Activated naive CD4-positive, alpha-beta T cell treated with anti-CD3 and anti-CD28 coated beads for 36 hours (primary cell): ENCODE measurements at regions of chr10 and their contacts with region 1.

Region 1: GRCh38 chr10:94362360-94363250 is at the start of gene NOC3L:
- DNase-seq: peak; percentile 96
- H3K4me3 Mint-ChIP-seq: peak within 1 kb of the TSS; percentile 83
- H3K27ac Mint-ChIP-seq: peak within 1 kb of the TSS; percentile 91
- H3K4me1 Mint-ChIP-seq: peaks cover 30% of the 10 kb centered on the region
- H3K27me3 Mint-ChIP-seq: no peaks in the 10 kb centered on the region
- total RNA-seq, gene NOC3L: 39.3 to 40.1 TPM

Region 2: DNA sequence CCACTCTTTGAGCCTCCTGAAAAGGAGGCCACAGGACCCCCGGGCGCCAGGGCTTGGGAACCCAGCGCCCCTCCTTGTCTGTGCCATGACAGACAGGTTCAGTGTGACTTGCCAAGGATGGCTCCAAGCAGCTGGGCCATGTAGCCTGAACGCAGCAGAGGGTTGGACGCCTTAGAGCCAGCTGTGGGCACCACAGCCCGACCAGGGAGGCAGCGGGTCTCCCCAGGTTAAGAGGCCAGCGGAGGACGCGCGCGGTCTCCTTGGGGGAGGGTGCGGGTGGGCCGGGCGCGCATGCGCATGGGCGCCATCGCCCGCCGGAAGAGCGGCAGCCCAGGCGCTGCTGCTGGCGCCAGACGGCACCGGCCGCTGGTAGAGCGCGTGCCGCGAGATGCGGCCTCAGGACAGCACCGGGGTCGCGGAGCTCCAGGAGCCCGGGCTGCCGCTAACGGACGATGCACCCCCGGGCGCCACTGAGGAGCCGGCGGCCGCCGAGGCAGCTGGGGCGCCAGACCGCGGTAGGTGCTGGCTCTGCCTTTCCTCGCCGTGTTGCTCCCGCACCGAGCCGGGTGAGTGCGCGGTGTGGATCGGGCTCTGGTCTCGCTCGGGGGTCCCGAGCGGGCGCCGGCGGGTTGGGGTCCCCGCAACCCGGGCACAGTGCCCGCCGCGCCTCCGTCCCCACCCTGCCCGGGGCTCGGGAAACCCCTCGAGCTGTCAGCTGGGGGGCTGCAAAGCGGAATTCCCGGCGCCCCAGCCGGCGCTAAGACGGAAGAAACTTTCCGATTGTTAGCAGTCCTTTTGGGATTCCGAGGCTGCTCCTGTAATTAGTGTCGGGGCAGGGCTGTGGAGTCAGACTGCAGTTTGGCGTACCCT is 468.7 kb before region 1 on chr10 and contains the start of gene SLC35G1:
- CTCF ChIA-PET with region 1: no interaction called
- intact Hi-C with region 1: loop called (anchors 5 kb)
- DNase-seq: peak; percentile 71
- H3K4me3 Mint-ChIP-seq: peak within 1 kb of the TSS; percentile 82
- H3K27ac Mint-ChIP-seq: peak within 1 kb of the TSS; percentile 37
- H3K4me1 Mint-ChIP-seq: peaks cover 37% of the 10 kb centered on the region
- H3K27me3 Mint-ChIP-seq: no peaks in the 10 kb centered on the region
- total RNA-seq, gene SLC35G1: 3.8 to 4.1 TPM

Region 3: GRCh38 chr10:94402015-94402842 is 39.6 kb after region 1 on chr10 and contains the start of gene TBC1D12:
- CTCF ChIA-PET with region 1: interaction called, 3 read pairs
- intact Hi-C with region 1: loop called (anchors 1 kb)
- DNase-seq: peak; percentile 39
- H3K4me3 Mint-ChIP-seq: peak within 1 kb of the TSS; percentile 74
- H3K27ac Mint-ChIP-seq: no peak within 1 kb of the TSS
- H3K4me1 Mint-ChIP-seq: peaks cover 4% of the 10 kb centered on the region
- H3K27me3 Mint-ChIP-seq: peaks cover 58% of the 10 kb centered on the region
- total RNA-seq, gene TBC1D12: 0.25 to 0.33 TPM

Region 4: DNA sequence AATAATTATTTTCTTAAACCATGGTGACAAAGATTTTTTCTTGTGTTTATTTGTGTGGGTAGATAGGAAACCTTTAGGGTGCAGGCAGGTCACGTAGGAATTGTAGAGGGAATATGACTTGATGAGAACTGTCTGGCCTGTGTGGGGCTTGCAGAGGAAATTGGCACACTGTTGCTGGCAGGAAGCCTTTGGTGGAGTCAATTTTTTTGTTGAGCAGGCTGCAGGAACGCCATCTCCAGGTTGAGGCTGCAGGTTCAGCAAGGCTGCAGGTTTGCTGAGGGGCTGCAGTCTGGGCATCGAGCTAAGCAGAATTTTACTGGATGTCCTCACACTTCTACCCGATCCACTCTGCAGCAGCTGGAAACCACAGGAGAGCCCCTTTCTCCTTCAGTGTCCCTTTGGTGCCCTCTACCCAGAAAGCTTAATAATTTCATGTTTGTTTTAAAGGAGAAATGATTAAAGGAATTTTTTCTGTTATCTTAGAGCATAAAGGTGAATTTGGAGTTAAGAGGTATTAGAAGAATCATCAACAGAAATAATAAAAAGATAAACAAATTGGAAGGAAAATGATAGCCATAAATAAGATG is 76.8 kb after region 1 on chr10:
- CTCF ChIA-PET with region 1: interaction called, 6 read pairs
- intact Hi-C with region 1: loop called (anchors 1 kb)
- DNase-seq: no peak
- H3K4me3 Mint-ChIP-seq: no peak overlapping the region
- H3K27ac Mint-ChIP-seq: no peak overlapping the region
- H3K4me1 Mint-ChIP-seq: no peaks in the 10 kb centered on the region
- H3K27me3 Mint-ChIP-seq: peaks cover 17% of the 10 kb centered on the region

Region 5: DNA sequence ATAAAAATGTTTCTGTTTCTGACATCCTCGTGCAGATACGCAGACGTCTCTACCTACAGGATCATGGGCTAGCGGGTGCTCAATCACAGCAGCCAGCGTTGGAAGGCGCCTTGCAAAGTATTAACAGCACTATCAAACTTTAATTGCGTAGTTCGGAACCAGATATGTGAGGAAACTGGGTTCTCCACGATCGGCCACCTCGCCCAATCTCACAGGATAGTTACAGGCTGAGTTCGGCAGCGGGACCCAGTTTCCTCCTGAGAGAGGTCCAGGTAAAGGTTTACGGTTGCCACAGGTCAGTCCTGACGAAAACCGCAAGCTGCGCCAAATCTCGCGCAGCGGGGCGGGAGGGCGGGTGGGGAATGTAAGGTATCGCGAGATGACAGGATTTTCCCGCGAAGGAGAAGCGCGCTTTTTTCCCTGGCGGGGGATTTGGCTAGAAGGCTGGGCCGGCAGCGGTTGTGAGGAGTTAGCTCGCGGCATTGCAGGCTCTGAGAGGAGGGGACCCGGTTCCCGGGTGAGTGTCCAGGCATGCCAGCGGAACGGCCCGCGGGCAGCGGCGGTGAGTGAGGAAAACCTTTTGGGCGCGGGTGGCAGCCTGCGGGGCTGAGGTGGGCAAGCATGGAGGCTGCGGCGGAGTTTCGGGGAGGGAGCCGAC is 182.9 kb after region 1 on chr10 and contains the start of gene HELLS:
- CTCF ChIA-PET with region 1: no interaction called
- intact Hi-C with region 1: loop called (anchors 1 kb)
- DNase-seq: peak; percentile 85
- H3K4me3 Mint-ChIP-seq: peak within 1 kb of the TSS; percentile 98
- H3K27ac Mint-ChIP-seq: peak within 1 kb of the TSS; percentile 89
- H3K4me1 Mint-ChIP-seq: peaks cover 13% of the 10 kb centered on the region
- H3K27me3 Mint-ChIP-seq: peaks cover 2% of the 10 kb centered on the region
- total RNA-seq, gene HELLS: 109 TPM

Region 6: DNA sequence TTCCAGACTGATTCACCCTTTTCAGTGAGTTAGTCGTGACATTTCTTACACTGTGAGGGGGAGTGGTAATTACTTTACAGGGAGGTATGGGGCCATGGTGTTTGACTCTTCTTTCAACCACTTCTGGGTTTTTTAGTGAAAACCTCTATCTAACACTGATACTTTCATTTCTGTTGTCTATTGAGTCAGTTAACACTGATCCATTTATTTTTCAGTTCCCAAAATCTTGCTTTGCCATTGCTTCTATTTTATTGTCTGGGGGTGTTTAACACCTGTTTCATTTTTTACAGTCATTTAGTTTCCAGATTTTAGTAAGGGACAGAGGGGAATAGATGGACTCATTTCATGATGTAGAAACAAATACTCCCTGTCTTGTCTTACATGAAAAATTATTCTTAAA is 244.5 kb after region 1 on chr10:
- CTCF ChIA-PET with region 1: no interaction called
- intact Hi-C with region 1: loop called (anchors 2 kb)
- DNase-seq: peak; percentile 10
- H3K4me3 Mint-ChIP-seq: no peak overlapping the region
- H3K27ac Mint-ChIP-seq: peak overlapping the region; percentile 82
- H3K4me1 Mint-ChIP-seq: peaks cover 17% of the 10 kb centered on the region
- H3K27me3 Mint-ChIP-seq: no peaks in the 10 kb centered on the region